Activated naive CD4-positive, alpha-beta T cell treated with anti-CD3 and anti-CD28 coated beads, Interleukin-2, amount 10 ng/mL, durations not matched to agents 7 days and 5 days (primary cell): ENCODE measurements at regions of chr5 and their contacts with region 1.

Region 1: DNA sequence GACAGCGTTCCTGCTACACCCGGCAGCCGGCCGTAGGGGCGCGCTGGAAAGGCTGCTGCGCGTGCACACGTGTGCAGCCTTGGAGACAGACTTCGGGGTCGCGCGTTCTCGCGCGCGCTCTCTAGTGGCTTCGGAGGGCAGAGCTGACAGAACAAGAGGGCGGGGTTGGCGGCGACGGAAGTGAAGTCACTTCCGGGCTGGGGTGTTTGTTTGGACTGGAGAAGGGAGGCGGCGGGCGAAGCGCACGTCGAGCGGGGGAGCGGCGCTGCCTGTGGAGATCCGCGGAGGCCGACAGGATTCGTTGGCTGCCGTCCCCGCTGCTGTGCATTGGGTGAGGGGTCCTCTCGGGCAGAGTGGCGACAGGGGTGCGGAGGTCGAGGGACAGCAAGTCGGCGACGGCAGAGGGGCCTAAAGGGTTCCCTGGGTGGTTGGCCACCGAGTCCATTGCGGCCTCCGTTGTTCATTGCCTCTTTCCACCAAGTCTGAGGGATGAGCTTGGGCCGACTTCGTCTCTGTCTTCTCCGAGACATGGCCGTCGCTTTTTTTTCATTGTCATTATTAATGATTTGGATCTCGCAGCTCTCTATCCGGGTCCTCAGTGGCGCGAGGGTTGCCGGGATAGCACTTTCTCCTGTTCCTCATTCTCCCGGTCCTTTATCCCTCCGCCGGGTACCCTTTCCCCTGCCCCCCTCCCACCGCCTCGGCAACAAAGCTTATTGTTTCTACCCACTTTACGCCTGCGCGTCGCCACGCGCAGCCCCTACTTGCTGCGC is at the start of gene PAIP2:
- DNase-seq: peak; percentile 98
- H3K4me3 Mint-ChIP-seq: peak within 1 kb of the TSS; percentile 95
- H3K27ac Mint-ChIP-seq: peak within 1 kb of the TSS; percentile 99
- H3K4me1 Mint-ChIP-seq: peaks cover 46% of the 10 kb centered on the region
- H3K27me3 Mint-ChIP-seq: peaks cover 5% of the 10 kb centered on the region

Region 2: DNA sequence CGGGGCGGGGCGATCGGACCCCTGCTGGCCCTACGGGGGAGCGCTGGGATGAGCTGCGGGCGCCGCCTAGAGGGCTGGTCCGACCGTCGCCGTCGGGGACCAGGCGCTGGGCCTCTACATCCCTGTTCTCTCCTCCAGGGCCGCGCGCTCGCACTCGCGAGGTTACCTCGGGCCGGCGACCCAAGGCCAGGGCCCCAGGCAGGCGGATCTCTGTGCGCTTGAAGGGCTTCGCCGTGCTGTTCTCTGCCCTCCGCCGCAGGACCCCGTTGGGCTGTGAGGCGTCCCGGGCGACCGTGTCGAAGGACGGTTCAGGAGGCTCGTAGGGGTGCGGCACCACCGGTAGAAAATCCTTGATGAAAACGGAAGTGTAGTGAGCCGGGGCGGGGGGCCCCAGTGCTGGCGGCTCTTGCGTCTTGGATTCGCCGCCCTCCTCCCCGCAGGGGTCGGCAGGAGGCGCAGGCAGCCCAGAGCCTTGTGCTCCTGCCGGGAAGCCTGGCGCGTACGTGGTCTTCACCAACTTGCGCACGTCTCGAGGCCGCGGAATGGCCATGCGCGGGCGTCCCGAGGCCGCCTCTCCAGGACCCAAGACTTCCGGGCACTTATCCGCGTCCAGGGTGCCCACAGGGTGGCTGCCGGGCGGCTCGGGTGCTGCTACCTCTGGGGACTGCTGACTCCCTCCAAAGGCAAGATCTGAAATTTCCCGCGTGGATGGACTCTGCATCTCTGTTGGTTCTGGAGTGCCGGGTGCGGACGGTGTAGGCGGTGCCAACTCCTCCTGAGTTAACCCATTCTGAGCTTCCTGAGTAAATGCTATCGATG is 51.1 kb after region 1 on chr5:
- CTCF ChIA-PET with region 1: interaction called, 13 read pairs
- DNase-seq: peak; percentile 88
- H3K4me3 Mint-ChIP-seq: peak overlapping the region; percentile 87
- H3K27ac Mint-ChIP-seq: peak overlapping the region; percentile 87
- H3K4me1 Mint-ChIP-seq: peaks cover 72% of the 10 kb centered on the region
- H3K27me3 Mint-ChIP-seq: peaks cover 30% of the 10 kb centered on the region

Region 3: DNA sequence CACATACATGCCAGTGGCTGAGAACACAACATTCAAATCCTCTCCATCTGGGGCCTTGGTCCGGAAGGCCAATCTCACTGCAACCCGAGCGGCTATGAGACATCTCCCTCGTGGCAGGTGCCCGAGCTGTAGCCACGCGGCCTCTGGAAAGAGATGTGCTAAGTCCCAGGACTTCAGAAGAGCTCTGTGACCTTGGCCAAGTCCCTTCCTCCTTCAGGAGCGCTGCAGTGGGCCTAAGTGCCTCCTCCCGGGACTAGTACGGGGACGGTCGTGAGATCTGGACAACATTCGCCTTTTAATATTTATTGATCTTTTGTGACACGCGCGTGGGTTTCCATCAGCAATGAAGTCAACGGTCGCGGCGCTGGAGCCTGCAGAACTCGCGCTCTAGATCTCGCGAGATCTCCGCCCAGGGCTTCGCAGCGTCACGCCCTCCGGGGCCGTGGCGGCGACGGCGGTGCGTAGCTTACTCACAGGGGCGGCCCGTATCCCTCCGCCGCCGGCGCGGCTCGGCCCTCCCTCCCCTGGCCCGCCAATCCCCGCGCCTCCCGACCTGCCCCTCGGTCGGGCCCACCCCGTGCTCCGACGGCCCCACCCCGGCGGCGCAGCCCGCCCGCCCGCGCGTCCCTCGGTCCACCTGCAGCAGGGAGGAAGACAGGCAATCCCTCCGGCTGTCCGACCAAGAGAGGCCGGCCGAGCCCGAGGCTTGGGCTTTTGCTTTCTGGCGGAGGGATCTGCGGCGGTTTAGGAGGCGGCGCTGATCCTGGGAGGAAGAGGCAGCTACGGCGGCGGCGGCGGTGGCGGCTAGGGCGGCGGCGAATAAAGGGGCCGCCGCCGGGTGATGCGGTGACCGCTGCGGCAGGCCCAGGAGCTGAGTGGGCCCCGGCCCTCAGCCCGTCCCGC is 219.2 kb after region 1 on chr5 and contains the start of gene UBE2D2:
- CTCF ChIA-PET with region 1: no interaction called
- DNase-seq: peak; percentile 98
- H3K4me3 Mint-ChIP-seq: peak within 1 kb of the TSS; percentile 98
- H3K27ac Mint-ChIP-seq: peak within 1 kb of the TSS; percentile 99
- H3K4me1 Mint-ChIP-seq: peaks cover 36% of the 10 kb centered on the region
- H3K27me3 Mint-ChIP-seq: no peaks in the 10 kb centered on the region